Heart right ventricle (tissue), 16 donors: ENCODE measurements at regions of chr13 and their contacts with region 1.

Region 1: GRCh38 chr13:50081679-50082425 is 66.6 kb downstream of the KCNRG start:
- DNase-seq: peak; percentile 96 to 98
- ATAC-seq: peak; percentile 95 to 98 (median 97)
- H3K4me3 ChIP-seq: peak overlapping the region; percentile 42 to 82 (median 70)
- H3K27ac ChIP-seq: peak overlapping the region; percentile 30 to 91 (median 77)
- H3K4me1 ChIP-seq: peaks cover 0 to 82% (median 30%) of the 10 kb centered on the region in 9 donors
- H3K27me3 ChIP-seq: peaks cover 0 to 5% (median 0%) of the 10 kb centered on the region in 7 donors
- CTCF ChIP-seq: peak in 3 of 9 donors; percentile 18 to 30 (median 23)

Region 2: DNA sequence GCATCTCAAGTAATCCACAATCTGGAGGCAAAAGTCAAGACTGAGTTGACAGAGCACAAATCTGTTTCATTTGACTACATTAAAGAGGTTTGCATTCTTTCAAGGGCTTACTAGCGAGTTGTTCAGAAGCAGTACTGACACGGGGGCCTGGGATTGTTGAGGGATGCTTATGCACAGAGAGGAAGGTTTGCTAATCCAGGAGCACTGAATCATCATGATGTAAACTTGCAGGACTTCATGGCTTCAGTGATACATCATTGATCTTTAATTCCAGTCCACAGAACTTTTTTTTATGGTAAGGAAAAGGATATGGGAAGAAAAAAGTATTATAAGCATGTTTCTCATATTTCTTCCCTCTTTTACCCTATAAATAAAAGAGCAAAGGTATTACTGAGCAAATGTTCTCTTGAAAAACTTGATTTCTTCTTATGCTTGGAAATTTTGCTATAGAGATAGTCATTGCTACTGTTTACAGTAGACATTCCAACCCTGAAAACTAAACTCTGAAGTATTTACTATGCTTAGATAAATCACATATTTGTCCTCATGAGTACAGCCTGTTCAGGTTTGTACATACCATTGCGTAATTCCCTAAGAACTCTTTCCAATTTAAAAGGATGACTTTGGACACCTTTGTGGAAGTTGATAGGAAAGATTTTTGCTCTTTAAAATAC is 223.5 kb before region 1 on chr13:
- intact Hi-C with region 1: no loop called
- DNase-seq: no peak
- ATAC-seq: peak in 1 of 8 donors; percentile 67
- H3K4me3 ChIP-seq: no peak overlapping the region
- H3K27ac ChIP-seq: no peak overlapping the region
- H3K4me1 ChIP-seq: peaks cover 0 to 4% (median 0%) of the 10 kb centered on the region in 9 donors
- H3K27me3 ChIP-seq: no peaks in the 10 kb centered on the region
- CTCF ChIP-seq: no peak

Region 3: DNA sequence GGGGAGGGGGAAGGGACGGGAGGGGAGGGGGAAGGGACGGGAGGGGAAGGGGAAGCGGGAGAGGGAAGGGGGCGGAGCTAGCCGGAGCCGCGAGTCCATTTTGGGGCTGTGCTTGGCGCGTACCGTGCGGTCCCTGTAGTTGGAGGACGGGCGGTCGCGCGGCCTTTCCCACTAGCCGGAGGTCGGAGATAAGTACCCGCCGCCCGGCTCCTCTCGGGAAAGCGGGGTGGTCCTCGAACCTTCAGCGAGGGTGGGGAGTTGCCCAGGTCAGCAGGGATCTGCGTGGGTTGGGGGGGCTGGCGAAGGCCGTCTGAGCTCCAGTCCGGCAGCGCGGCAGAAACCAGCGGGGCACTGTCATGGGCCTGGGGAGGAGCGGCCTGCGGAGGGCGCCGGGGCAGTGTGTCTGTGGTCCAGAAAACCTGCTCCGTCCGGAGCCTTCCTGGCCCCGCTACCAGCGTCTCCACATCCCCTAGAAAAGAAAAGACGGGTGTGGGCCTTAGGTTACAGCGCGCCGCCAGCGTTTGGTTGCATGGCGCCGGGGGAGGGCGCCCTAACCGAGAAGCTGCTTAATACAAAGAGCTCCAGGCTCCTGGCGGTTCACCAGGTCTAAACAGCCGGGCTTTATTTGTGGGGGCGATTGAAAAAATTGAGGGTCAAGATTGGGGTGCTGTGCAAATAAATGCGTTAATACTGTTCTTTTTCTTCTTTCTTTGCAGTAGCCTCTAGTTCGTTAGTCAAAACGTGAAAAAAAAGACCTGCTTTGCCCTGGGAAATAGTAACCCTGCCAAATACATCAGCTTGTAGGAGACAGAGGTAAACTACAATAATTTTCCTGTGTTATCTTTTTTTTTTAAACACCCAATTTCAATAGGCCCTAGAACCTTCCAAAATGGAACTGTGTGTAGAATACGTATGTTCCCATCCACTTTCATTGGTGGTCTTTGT is 84.6 kb before region 1 on chr13 and contains the start of gene TRIM13:
- intact Hi-C with region 1: loop called in 7 of 10 experiments (anchors 1 to 10 kb)
- DNase-seq: peak; percentile 91
- ATAC-seq: peak; percentile 87 to 95 (median 93)
- H3K4me3 ChIP-seq: peak within 1 kb of the TSS; percentile 61 to 99 (median 91)
- H3K27ac ChIP-seq: peak within 1 kb of the TSS; percentile 93 to 100 (median 99)
- H3K4me1 ChIP-seq: peaks cover 11 to 58% (median 48%) of the 10 kb centered on the region in 9 donors
- H3K27me3 ChIP-seq: no peaks in the 10 kb centered on the region
- CTCF ChIP-seq: peak; percentile 35 to 94 (median 80)
- total RNA-seq, gene TRIM13: 16.0 to 26.9 (median 19.1) TPM

Region 4: GRCh38 chr13:50123862-50124536 is 42.1 kb after region 1 on chr13:
- intact Hi-C with region 1: loop called in 9 of 10 experiments (anchors 1 to 5 kb)
- DNase-seq: peak; percentile 87 to 97
- ATAC-seq: peak; percentile 86 to 95 (median 92)
- H3K4me3 ChIP-seq: peak overlapping the region; percentile 51 to 98 (median 94)
- H3K27ac ChIP-seq: peak overlapping the region; percentile 94 to 100 (median 100)
- H3K4me1 ChIP-seq: peaks cover 2 to 70% (median 53%) of the 10 kb centered on the region in 9 donors
- H3K27me3 ChIP-seq: peaks cover 0 to 14% (median 5%) of the 10 kb centered on the region in 7 donors
- CTCF ChIP-seq: peak in 2 of 9 donors; percentile 23 to 43

Region 5: DNA sequence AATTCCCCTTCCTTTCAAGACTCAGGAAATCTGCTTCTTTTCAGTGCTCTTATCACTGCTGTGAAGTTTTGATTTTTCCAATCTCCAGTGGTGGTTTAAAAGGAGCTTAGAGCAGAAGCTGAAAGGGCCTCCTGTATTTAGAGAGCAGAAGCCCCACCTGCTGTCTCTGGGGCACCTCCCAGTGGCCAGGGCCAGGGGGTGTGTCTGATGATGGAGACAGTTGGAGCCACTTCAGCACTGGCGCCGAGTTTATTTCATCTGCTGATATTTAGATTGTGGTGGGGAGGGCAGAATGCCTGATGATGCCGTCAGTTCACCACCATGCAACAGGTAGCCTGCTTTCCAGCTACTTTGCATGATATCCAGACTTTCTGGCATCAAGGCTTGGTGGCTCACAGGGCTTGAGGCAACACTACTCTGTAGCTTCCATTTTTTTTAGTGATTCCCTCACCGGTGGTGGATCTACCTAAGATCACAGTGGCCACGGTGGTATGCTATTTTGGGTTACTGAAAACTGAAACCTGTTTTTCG is 305.3 kb after region 1 on chr13:
- intact Hi-C with region 1: loop called in 1 of 10 experiments (anchors 2 kb)
- DNase-seq: peak; percentile 52 to 65
- ATAC-seq: peak; percentile 86 to 96 (median 94)
- H3K4me3 ChIP-seq: peak overlapping the region in 9 of 10 donors; percentile 4 to 43 (median 35)
- H3K27ac ChIP-seq: peak overlapping the region; percentile 5 to 83 (median 78)
- H3K4me1 ChIP-seq: peaks cover 0 to 34% (median 19%) of the 10 kb centered on the region in 9 donors
- H3K27me3 ChIP-seq: no peaks in the 10 kb centered on the region
- CTCF ChIP-seq: peak in 6 of 9 donors; percentile 27 to 54 (median 38)

Region 6: GRCh38 chr13:50911937-50912795 is 830.3 kb after region 1 on chr13:
- intact Hi-C with region 1: loop called in 8 of 10 experiments (anchors 5 to 10 kb)
- DNase-seq: peak; percentile 87 to 89
- ATAC-seq: peak in 7 of 8 donors; percentile 14 to 69 (median 49)
- H3K4me3 ChIP-seq: peak overlapping the region in 1 of 10 donors; percentile 86
- H3K27ac ChIP-seq: peak overlapping the region in 6 of 10 donors; percentile 20 to 96 (median 69)
- H3K4me1 ChIP-seq: peaks cover 8 to 75% (median 56%) of the 10 kb centered on the region in 9 donors
- H3K27me3 ChIP-seq: no peaks in the 10 kb centered on the region
- CTCF ChIP-seq: peak; percentile 65 to 91 (median 87)